Left cardiac atrium (tissue), 4 donors: ENCODE measurements at regions of chr1 and their contacts with region 1.

Region 1: GRCh38 chr1:115099693-115100050 is 10.4 kb upstream of the TSPAN2 start:
- DNase-seq: no peak
- ATAC-seq: peak in 1 of 2 donors; percentile 61

Region 2: DNA sequence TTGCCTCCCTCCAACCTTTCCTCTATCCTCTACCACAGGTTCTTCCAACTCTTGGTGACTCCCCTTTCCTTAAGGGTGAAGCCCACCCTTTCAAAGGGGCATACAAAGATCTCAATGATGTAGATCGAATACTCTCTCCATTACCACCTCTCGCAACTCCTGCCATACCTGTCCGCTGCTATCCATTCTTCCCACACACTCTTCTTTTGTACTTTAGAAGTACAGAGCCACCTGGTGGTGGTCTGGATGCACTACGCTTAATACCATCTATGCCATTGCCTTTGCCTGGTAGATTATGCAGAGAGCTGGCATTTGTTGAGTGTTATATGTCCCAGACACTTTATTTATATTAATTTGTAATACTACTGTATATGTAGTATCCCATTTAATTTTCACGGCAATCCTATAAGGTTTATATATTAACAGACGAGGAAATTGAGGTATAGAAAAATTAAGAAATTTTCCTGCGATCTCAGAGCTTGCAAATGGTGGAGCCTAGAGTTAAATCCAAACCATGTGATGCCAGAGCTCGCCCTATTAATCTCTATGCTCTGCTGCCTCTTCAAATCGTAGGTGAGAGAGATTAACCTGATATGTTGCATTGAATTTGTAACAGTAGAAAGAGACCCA is 47.1 kb before region 1 on chr1:
- intact Hi-C with region 1: loop called in 1 of 2 experiments (anchors 10 kb)
- DNase-seq: peak; percentile 45
- ATAC-seq: peak; percentile 65 to 76